ENCODE measurements at regions of chr10 and their contacts with region 1.

Region 1: DNA sequence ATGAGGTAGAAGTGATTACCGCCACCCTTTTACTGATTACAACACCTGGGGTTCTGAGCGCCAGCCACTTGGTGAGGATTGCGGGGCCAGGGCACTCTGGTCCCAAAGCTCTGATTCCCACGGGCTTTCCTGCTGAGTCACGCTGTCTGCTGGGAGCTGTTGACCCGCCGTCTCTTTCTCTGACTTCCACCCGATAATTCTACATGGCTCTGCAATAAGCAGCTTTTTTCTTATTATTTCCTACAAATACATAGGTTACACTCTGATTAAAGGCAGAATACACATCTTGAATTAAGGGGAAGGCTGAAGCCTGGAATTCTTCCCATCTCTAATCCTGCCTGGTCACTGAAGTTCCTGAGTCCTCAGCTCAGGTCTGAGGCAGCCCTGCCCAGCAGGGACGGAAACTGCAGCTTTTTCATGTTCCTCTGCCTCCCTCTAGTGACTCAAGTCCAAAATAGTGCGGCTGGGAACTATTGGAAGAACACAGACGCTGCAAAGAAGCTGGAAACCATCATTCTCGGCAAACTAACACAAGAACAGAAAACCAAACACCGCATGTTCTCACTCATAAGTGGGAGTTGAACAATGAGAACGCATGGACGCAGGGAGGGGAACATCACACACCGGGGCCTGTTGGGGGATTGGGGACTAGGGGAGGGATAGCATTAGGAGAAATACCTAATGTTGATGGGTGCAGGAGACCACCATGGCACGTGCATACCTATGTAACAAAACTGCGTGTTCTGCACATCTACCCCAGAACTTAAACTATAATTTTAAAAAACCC is 178.3 kb downstream of the PRKCQ start:
- DNase-seq: peak; percentile 84
- H3K4me3 ChIP-seq: peak overlapping the region; percentile 38
- H3K27ac ChIP-seq: peak overlapping the region; percentile 63
- H3K27me3 ChIP-seq: no peaks in the 10 kb centered on the region
- CTCF ChIP-seq: peak; percentile 77

Region 2: DNA sequence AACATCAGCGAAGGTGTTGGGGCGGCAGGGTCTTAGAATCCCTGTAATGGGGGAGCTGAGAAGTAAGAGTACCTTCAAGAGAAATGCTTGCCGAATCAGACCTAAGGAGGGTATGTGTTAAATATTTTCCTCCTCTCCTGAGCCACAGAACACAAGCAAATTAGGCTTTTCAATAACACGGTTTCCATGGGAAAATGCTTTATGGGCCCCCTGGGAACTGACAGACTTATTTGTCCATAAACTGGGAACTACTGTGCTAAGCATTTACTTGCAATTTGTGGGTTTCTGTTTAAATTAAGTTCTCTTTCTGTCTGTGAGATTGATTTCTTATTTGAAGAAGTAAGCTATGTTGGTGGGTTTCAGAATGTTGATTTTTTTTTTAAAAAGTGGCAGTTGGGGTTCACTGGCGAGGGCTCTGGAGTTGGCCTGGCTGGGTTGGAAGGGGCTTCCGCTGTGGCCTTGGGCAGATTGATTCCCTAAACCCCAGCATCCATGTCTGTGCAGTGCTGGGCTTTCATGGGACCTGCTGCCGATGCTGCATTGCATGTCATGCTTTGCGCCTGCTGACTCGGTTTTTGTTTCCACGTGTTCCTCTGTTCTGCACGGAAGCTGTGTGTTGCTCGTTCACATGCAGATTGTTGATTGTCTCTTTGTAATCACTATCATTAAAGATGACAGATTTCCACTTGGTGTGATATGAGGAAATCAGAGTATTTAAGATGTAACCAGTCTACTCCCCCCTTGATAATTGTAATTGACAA is 305.8 kb before region 1 on chr10:
- CTCF ChIA-PET with region 1: interaction called, 18 read pairs
- POLR2A ChIA-PET with region 1: no interaction called
- DNase-seq: no peak
- H3K4me3 ChIP-seq: no peak overlapping the region
- H3K27ac ChIP-seq: no peak overlapping the region
- H3K27me3 ChIP-seq: no peaks in the 10 kb centered on the region
- CTCF ChIP-seq: no peak

Region 3: GRCh38 chr10:6130848-6131470 is 270.8 kb before region 1 on chr10:
- CTCF ChIA-PET with region 1: interaction called, 19 read pairs
- POLR2A ChIA-PET with region 1: interaction called, 7 read pairs
- DNase-seq: no peak
- H3K4me3 ChIP-seq: no peak overlapping the region
- H3K27ac ChIP-seq: no peak overlapping the region
- H3K27me3 ChIP-seq: no peaks in the 10 kb centered on the region
- CTCF ChIP-seq: no peak

Region 4: GRCh38 chr10:6163364-6164270 is 238.1 kb before region 1 on chr10:
- CTCF ChIA-PET with region 1: interaction called, 18 read pairs
- POLR2A ChIA-PET with region 1: interaction called, 6 read pairs
- DNase-seq: no peak
- H3K4me3 ChIP-seq: peak overlapping the region; percentile 78
- H3K27ac ChIP-seq: peak overlapping the region; percentile 47
- H3K27me3 ChIP-seq: no peaks in the 10 kb centered on the region
- CTCF ChIP-seq: no peak

Region 5: GRCh38 chr10:6195846-6196245 is 205.9 kb before region 1 on chr10:
- CTCF ChIA-PET with region 1: interaction called, 221 read pairs
- POLR2A ChIA-PET with region 1: interaction called, 176 read pairs
- DNase-seq: no peak
- H3K4me3 ChIP-seq: no peak overlapping the region
- H3K27ac ChIP-seq: no peak overlapping the region
- H3K27me3 ChIP-seq: no peaks in the 10 kb centered on the region
- CTCF ChIP-seq: no peak

Region 6: GRCh38 chr10:6239213-6239991 is 162.4 kb before region 1 on chr10:
- CTCF ChIA-PET with region 1: interaction called, 16 read pairs
- POLR2A ChIA-PET with region 1: interaction called, 4 read pairs
- DNase-seq: peak; percentile 92
- H3K4me3 ChIP-seq: no peak overlapping the region
- H3K27ac ChIP-seq: peak overlapping the region; percentile 68
- H3K27me3 ChIP-seq: no peaks in the 10 kb centered on the region
- CTCF ChIP-seq: no peak

Region 7: GRCh38 chr10:6328699-6329423 is 72.9 kb before region 1 on chr10:
- CTCF ChIA-PET with region 1: no interaction called
- POLR2A ChIA-PET with region 1: no interaction called
- DNase-seq: no peak
- H3K4me3 ChIP-seq: no peak overlapping the region
- H3K27ac ChIP-seq: no peak overlapping the region
- H3K27me3 ChIP-seq: no peaks in the 10 kb centered on the region
- CTCF ChIP-seq: no peak

Region 8: GRCh38 chr10:6388261-6388893 is 13.4 kb before region 1 on chr10:
- CTCF ChIA-PET with region 1: interaction called, 17 read pairs
- POLR2A ChIA-PET with region 1: interaction called, 10 read pairs
- DNase-seq: no peak
- H3K4me3 ChIP-seq: no peak overlapping the region
- H3K27ac ChIP-seq: no peak overlapping the region
- H3K27me3 ChIP-seq: no peaks in the 10 kb centered on the region
- CTCF ChIP-seq: no peak